ENCODE measurements at regions of chr11 and their contacts with region 1.

Region 1: DNA sequence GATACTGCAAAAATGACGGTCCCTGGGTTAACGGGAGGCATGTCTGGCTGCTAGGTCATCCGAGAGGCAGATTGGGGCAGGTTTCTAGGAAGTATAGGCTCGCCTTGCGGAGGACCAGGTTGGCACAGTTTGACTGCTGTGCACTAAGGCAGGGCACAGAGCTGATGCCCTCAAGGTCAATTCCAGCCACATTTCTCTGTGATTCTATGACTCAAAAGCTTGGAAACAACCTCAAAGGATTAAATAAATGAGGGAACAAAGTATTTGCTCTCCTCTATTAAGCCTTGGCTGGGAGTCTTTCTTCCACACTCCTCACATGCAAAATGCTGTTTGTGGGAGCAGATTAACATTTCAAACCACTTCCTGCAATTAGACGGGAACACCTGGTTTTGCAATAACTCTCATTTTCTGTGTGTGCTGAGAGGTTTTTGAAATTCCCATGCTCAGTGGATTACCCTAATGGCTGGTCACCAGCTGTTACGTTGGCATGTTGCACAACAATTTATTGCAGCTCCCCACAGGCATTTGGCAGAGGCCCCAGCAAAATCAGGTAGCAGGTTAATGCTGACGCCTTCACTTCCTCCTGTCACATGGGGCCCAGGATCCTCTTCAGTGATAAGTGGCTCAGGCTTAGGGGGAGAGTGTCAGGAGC is 61.0 kb upstream of the PLET1 start:
- DNase-seq: peak; percentile 99
- H3K4me3 Mint-ChIP-seq: no peak overlapping the region
- H3K27ac Mint-ChIP-seq: peak overlapping the region; percentile 44
- H3K4me1 Mint-ChIP-seq: peaks cover 50% of the 10 kb centered on the region
- H3K27me3 Mint-ChIP-seq: no peaks in the 10 kb centered on the region
- CTCF ChIP-seq: no peak

Region 2: DNA sequence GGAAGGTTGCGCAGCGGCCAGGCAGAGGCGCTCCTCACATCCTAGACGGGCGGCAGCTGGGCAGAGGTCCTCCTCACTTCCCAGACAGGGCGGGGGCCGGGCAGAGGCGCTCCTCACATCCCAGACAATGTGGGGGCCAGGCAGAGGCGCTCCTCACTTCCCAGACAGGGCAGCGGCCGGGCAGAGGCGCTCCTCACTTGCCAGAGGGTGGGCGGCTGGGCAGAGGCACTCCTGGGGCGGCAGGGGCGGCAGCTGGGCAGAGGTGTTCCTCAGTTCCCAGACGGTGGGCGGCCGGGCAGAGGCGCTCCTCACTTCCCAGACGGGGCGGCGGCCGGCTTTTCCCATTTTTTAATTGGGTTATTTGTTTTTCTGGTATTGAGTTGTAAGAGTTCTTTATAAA is 115.6 kb before region 1 on chr11:
- CTCF ChIA-PET with region 1: no interaction called
- POLR2A ChIA-PET with region 1: no interaction called
- intact Hi-C with region 1: no loop called
- DNase-seq: no peak
- H3K4me3 Mint-ChIP-seq: no peak overlapping the region
- H3K27ac Mint-ChIP-seq: no peak overlapping the region
- H3K4me1 Mint-ChIP-seq: no peaks in the 10 kb centered on the region
- H3K27me3 Mint-ChIP-seq: no peaks in the 10 kb centered on the region
- CTCF ChIP-seq: no peak

Region 3: GRCh38 chr11:112274007-112274783 is 47.5 kb before region 1 on chr11:
- CTCF ChIA-PET with region 1: no interaction called
- POLR2A ChIA-PET with region 1: no interaction called
- intact Hi-C with region 1: no loop called
- DNase-seq: no peak
- H3K4me3 Mint-ChIP-seq: no peak overlapping the region
- H3K27ac Mint-ChIP-seq: no peak overlapping the region
- H3K4me1 Mint-ChIP-seq: no peaks in the 10 kb centered on the region
- H3K27me3 Mint-ChIP-seq: no peaks in the 10 kb centered on the region
- CTCF ChIP-seq: no peak

Region 4: GRCh38 chr11:112310419-112310818 is 11.2 kb before region 1 on chr11:
- CTCF ChIA-PET with region 1: interaction called, 3 read pairs
- POLR2A ChIA-PET with region 1: interaction called, 26 read pairs
- intact Hi-C with region 1: no loop called
- DNase-seq: peak; percentile 97
- H3K4me3 Mint-ChIP-seq: no peak overlapping the region
- H3K27ac Mint-ChIP-seq: no peak overlapping the region
- H3K4me1 Mint-ChIP-seq: peaks cover 16% of the 10 kb centered on the region
- H3K27me3 Mint-ChIP-seq: no peaks in the 10 kb centered on the region
- CTCF ChIP-seq: no peak

Region 5: GRCh38 chr11:112334381-112334780 is 12.7 kb after region 1 on chr11:
- CTCF ChIA-PET with region 1: interaction called, 3 read pairs
- POLR2A ChIA-PET with region 1: interaction called, 10 read pairs
- intact Hi-C with region 1: no loop called
- DNase-seq: peak; percentile 75
- H3K4me3 Mint-ChIP-seq: no peak overlapping the region
- H3K27ac Mint-ChIP-seq: no peak overlapping the region
- H3K4me1 Mint-ChIP-seq: no peaks in the 10 kb centered on the region
- H3K27me3 Mint-ChIP-seq: peaks cover 62% of the 10 kb centered on the region
- CTCF ChIP-seq: no peak

Region 6: GRCh38 chr11:112364962-112365481 is 43.4 kb after region 1 on chr11:
- CTCF ChIA-PET with region 1: no interaction called
- POLR2A ChIA-PET with region 1: interaction called, 12 read pairs
- intact Hi-C with region 1: no loop called
- DNase-seq: peak; percentile 69
- H3K4me3 Mint-ChIP-seq: no peak overlapping the region
- H3K27ac Mint-ChIP-seq: no peak overlapping the region
- H3K4me1 Mint-ChIP-seq: peaks cover 14% of the 10 kb centered on the region
- H3K27me3 Mint-ChIP-seq: no peaks in the 10 kb centered on the region
- CTCF ChIP-seq: no peak

Region 7: GRCh38 chr11:112470355-112470754 is 148.7 kb after region 1 on chr11:
- CTCF ChIA-PET with region 1: no interaction called
- POLR2A ChIA-PET with region 1: no interaction called
- intact Hi-C with region 1: no loop called
- DNase-seq: peak; percentile 6
- H3K4me3 Mint-ChIP-seq: no peak overlapping the region
- H3K27ac Mint-ChIP-seq: no peak overlapping the region
- H3K4me1 Mint-ChIP-seq: peaks cover 5% of the 10 kb centered on the region
- H3K27me3 Mint-ChIP-seq: peaks cover 41% of the 10 kb centered on the region
- CTCF ChIP-seq: no peak